Natural killer cell (primary cell): ENCODE measurements at regions of chr6 and their contacts with region 1.

Region 1: DNA sequence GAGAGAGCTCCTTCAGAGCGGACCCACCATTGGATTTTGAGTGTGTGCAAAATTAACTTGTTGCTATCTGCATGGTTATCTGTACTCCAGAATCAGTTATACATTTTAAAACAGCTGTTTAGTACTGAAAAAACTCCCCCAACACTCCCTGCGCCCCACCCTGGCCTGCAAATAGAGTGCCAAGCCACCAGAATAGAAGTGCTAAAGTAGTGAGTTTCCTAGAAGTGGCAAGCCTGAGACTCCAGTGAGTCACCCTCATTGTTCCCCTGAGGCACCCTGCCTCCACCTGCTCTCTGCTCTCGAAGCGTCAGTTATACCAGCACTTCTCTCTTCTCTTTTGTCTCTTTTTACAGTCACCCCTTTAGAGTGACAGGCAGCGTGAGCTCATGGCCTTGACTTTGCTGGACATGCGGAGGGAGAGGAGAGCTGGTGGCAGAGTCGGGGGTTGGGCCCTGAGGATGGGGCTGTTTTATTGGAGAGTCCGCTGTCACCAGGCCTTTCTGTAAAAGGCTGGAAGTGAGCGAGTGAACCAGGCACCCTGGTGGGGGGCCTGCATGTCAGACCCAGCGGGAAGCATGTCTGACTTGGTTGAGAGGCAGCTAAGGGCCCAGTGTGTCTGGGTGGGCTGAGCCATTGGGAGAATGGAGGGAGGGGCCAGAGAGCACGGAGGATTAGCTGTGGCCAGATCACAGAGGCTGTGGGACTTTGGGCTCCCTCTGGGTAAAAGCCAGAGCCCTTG is 10.4 kb downstream of the IGF2R start:
- DNase-seq: peak; percentile 74 to 77
- ATAC-seq: peak; percentile 68 to 86 (median 80)
- H3K4me3 ChIP-seq: no peak overlapping the region
- H3K4me3 Mint-ChIP-seq: peak overlapping the region; percentile 94
- H3K27ac ChIP-seq: peak overlapping the region; percentile 93
- H3K27ac Mint-ChIP-seq: peak overlapping the region; percentile 94 to 99
- H3K4me1 ChIP-seq: peaks cover 81% of the 10 kb centered on the region
- H3K4me1 Mint-ChIP-seq: peaks cover 97 to 100% of the 10 kb centered on the region in 2 donors
- H3K27me3 ChIP-seq: no peaks in the 10 kb centered on the region
- H3K27me3 Mint-ChIP-seq: no peaks in the 10 kb centered on the region
- CTCF ChIP-seq: no peak

Region 2: DNA sequence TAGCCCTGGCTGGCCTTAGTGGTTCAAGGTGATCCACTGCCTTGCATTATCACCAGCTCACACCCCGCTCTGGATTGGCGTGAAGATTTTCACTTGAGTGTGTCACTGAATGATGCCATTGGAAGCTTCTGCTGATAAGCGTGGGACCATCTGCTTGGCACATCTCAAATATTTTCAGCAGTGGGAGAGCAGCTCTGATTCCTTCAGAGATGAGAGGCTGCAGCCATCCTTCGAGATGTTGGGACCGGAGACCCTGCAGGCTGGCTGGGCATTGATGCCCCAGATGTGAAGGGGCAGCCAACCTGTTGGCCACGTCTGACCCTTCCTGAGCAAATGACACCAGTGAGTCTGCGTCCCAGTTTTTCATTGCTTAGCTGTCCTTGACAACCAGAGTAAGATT is 88.5 kb before region 1 on chr6 and contains the start of gene MAS1:
- intact Hi-C with region 1: no loop called
- DNase-seq: no peak
- ATAC-seq: no peak
- H3K4me3 ChIP-seq: no peak within 1 kb of the TSS
- H3K4me3 Mint-ChIP-seq: no peak within 1 kb of the TSS
- H3K27ac ChIP-seq: no peak within 1 kb of the TSS
- H3K27ac Mint-ChIP-seq: no peak within 1 kb of the TSS
- H3K4me1 ChIP-seq: no peaks in the 10 kb centered on the region
- H3K4me1 Mint-ChIP-seq: no peaks in the 10 kb centered on the region
- H3K27me3 ChIP-seq: no peaks in the 10 kb centered on the region
- H3K27me3 Mint-ChIP-seq: peaks cover 50 to 91% of the 10 kb centered on the region in 2 donors
- CTCF ChIP-seq: no peak
- total RNA-seq, gene MAS1: not detected

Region 3: DNA sequence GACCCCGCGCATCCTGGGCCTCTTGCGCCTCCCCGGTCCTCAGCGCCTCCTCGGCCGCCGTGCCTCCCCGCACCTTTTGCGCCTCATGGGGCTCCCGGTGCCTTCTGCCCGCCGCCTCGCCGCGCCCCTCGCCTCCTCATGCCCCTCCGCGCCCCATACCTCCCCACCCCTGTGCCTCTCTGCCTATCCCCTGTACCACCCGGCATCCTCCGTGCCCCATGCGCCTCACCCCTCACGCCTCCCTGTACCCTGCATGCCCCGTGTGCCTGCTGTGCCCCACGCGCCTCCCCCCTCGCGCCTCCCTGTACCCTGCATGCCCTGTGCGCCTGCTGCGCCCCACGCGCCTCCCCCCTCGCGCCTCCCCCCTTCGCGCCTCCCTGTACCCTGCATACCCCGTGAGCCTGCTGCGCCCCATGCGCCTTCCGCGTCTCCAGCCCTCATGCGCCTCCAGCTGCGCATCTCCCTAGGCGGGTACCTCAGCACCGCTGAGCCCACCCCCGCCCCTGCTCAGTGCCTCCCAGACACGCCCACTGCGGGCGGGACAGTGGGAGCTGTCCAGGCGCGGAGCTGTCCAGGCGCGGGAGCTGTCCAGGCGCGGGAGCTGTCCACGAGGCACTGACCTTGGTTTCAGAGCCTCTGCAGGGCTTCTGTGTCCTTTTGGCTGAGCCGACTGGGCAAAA is 26.7 kb after region 1 on chr6:
- intact Hi-C with region 1: no loop called
- DNase-seq: no peak
- ATAC-seq: peak; percentile 54 to 68 (median 66)
- H3K4me3 ChIP-seq: no peak overlapping the region
- H3K4me3 Mint-ChIP-seq: peak overlapping the region; percentile 67
- H3K27ac ChIP-seq: no peak overlapping the region
- H3K27ac Mint-ChIP-seq: peak overlapping the region in 1 of 2 donors; percentile 50
- H3K4me1 ChIP-seq: peaks cover 15% of the 10 kb centered on the region
- H3K4me1 Mint-ChIP-seq: peaks cover 61% of the 10 kb centered on the region in 2 donors
- H3K27me3 ChIP-seq: no peaks in the 10 kb centered on the region
- H3K27me3 Mint-ChIP-seq: no peaks in the 10 kb centered on the region
- CTCF ChIP-seq: no peak

Region 4: GRCh38 chr6:160028487-160029275 is 49.4 kb after region 1 on chr6:
- intact Hi-C with region 1: loop called (anchors 2 kb)
- DNase-seq: peak; percentile 44 to 61
- ATAC-seq: peak; percentile 79 to 93 (median 92)
- H3K4me3 ChIP-seq: no peak overlapping the region
- H3K4me3 Mint-ChIP-seq: no peak overlapping the region
- H3K27ac ChIP-seq: peak overlapping the region; percentile 30
- H3K27ac Mint-ChIP-seq: peak overlapping the region; percentile 86 to 94
- H3K4me1 ChIP-seq: peaks cover 10% of the 10 kb centered on the region
- H3K4me1 Mint-ChIP-seq: peaks cover 29 to 31% of the 10 kb centered on the region in 2 donors
- H3K27me3 ChIP-seq: no peaks in the 10 kb centered on the region
- H3K27me3 Mint-ChIP-seq: no peaks in the 10 kb centered on the region
- CTCF ChIP-seq: peak; percentile 13